ENCODE measurements at regions of chr5 and their contacts with region 1.

Region 1: GRCh38 chr5:93273176-93273575 is 307.8 kb downstream of the NR2F1-AS1 start:
- DNase-seq: peak; percentile 58
- H3K27ac ChIP-seq: no peak overlapping the region
- CTCF ChIP-seq: no peak

Region 2: DNA sequence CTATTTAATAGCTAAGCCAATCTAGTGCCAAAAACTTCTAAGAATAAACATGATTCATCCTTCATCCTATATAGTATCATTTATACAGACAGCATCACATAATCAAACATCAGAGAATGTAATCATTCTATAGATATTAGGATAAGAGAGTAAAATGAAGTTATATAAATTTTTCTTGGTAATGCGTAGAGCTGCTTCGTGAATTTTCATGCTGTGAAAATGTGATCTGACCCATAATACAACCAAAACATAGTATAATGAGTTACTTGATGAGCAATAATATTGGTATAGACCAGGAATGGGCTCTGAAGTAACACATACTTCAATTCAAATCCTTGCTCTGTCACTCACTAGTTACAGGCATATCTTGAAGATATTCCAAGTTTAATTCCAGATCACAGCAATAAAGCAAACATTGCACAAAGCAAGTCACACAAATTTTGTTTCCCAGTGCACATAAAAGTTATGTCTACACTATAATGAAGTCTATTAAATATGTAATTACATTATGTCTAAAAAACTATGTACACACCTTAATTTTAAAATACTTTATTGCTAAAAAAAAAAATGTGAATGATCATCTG is 283.9 kb after region 1 on chr5:
- CTCF ChIA-PET with region 1: interaction called, 10 read pairs
- POLR2A ChIA-PET with region 1: no interaction called
- DNase-seq: no peak
- H3K27ac ChIP-seq: no peak overlapping the region
- CTCF ChIP-seq: no peak